HEK293T (cell line): ENCODE measurements at regions of chr16 and their contacts with region 1.

Region 1: DNA sequence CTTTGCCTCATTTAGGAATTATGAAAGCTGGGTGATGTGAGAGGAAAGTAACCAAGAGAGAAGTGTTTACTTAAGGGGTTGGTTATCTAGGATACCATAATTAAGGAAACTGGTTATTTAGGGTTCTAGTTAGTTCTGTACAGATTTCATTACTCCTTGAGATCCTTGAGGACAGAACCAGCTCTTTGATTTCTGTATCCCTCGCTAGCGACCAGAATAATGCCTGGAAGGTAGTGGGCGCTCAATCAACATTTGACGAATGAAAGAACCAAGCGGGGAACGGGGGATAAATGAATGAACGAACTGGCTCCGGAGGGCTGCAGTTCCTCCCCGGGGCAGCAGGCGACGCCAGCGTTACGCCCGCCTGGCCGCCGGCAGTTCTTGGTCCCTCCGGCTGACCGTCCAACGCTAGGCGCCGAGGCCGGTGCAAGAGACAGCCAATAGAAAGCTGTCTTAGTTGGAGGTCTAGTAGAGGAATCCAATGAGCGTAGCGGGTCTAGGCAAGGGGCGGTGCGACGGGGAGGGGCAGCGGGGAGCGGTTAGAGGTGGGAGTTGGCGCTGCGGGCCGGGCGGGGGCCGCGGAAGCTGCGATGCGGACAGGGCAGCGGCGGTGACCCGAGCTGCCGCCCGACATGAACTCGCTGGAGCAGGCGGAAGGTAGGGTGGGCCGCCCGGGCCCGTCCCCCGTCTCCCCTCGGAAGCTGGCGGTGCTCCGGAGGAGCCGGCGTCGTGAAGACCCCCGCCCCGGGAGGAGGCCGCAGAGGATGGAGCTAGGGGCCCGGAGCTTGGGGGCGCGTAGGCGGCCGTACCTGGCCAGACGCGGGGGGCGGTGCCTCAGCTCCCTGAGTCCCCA is at the start of gene CNEP1R1:
- DNase-seq: peak; percentile 97

Region 2: GRCh38 chr16:50011707-50012106 is 13.2 kb before region 1 on chr16:
- CTCF ChIA-PET with region 1: interaction called, 10 read pairs
- POLR2A ChIA-PET with region 1: no interaction called
- DNase-seq: no peak

Region 3: DNA sequence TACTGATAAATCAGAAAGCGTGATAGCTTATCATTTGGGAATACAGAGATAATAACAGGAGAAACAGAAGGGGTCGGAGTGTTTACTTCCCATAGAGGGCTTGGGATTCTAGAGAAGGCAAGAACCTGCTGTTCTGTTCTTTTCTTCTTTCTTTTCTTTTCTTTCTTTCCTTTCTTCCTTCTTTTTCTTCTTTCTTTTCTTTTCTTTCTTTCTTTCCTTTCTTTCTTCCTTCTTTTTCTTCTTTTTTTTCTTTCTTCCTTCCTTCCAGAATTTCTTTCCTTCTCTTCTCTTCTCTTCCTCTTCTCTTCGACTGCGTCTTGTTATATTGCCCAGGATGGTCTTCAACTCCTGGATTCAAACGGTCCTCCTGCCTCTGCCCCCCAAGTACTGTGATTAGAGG is 18.4 kb after region 1 on chr16:
- CTCF ChIA-PET with region 1: interaction called, 18 read pairs
- POLR2A ChIA-PET with region 1: interaction called, 3 read pairs
- DNase-seq: no peak

Region 4: GRCh38 chr16:50065624-50066481 is 40.9 kb after region 1 on chr16 and contains the start of gene HEATR3:
- CTCF ChIA-PET with region 1: interaction called, 5 read pairs
- POLR2A ChIA-PET with region 1: interaction called, 13 read pairs
- DNase-seq: peak; percentile 95

Region 5: GRCh38 chr16:50210266-50211038 is 185.5 kb after region 1 on chr16:
- CTCF ChIA-PET with region 1: interaction called, 19 read pairs
- POLR2A ChIA-PET with region 1: interaction called, 5 read pairs
- DNase-seq: peak; percentile 64